CD4-positive, alpha-beta T cell (primary cell): ENCODE measurements at regions of chr19 and their contacts with region 1.

Region 1: DNA sequence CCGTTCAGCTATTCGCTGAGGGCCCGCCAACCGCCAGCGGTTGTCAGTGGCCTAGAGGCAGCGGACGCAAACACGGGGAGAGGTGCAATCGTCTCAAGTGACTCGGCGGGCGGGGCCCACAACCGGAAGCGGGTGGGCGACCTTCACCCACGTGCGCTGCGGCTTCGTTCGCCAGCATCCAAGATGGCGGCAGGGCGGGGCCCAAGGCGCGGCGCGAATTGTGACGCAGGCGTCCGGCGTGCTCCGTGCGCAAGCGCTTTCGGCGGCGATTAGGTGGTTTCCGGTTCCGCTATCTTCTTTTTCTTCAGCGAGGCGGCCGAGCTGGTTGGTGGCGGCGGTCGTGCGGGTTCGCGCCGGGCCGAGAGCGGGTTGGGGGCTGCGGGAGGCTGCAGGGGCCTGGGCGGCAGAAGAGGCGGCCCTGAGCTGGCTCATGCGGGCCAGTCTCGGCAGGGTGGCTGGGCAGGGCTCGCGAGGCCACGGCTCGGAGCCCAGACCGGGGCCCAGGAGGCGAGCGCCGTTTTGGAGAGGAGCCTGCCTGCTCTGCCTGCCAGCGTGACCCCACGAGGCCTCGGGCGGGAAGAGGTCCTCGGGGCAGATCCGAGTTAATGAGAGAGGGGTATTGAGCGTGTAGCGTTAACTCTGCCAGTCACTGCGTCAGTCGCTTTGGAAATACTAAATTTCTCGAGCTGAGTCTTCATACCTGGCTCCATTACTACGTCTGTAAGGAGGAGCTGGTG is at the start of gene UBA52:
- DNase-seq: peak; percentile 96 to 100 (median 98)
- ATAC-seq: peak; percentile 91
- H3K4me3 ChIP-seq: peak within 1 kb of the TSS; percentile 97
- H3K4me3 Mint-ChIP-seq: peak within 1 kb of the TSS; percentile 91
- H3K27ac ChIP-seq: peak within 1 kb of the TSS; percentile 89 to 94
- H3K27ac Mint-ChIP-seq: peak within 1 kb of the TSS; percentile 93
- H3K4me1 ChIP-seq: peaks cover 28% of the 10 kb centered on the region
- H3K4me1 Mint-ChIP-seq: peaks cover 20% of the 10 kb centered on the region
- H3K27me3 ChIP-seq: no peaks in the 10 kb centered on the region
- H3K27me3 Mint-ChIP-seq: no peaks in the 10 kb centered on the region
- CTCF ChIP-seq: no peak
- total RNA-seq, gene UBA52: 2,255 to 2,378 TPM

Region 2: GRCh38 chr19:18542936-18543815 is 28.6 kb before region 1 on chr19 and contains the start of gene FKBP8:
- CTCF ChIA-PET with region 1: interaction called, 6 read pairs
- POLR2A ChIA-PET with region 1: interaction called, 35 read pairs
- intact Hi-C with region 1: loop called (anchors 2 kb)
- DNase-seq: peak; percentile 89 to 97 (median 94)
- ATAC-seq: peak; percentile 93
- H3K4me3 ChIP-seq: peak within 1 kb of the TSS; percentile 63
- H3K4me3 Mint-ChIP-seq: peak within 1 kb of the TSS; percentile 98
- H3K27ac ChIP-seq: peak within 1 kb of the TSS; percentile 66 to 85
- H3K27ac Mint-ChIP-seq: peak within 1 kb of the TSS; percentile 96
- H3K4me1 ChIP-seq: peaks cover 28% of the 10 kb centered on the region
- H3K4me1 Mint-ChIP-seq: peaks cover 27% of the 10 kb centered on the region
- H3K27me3 ChIP-seq: no peaks in the 10 kb centered on the region
- H3K27me3 Mint-ChIP-seq: no peaks in the 10 kb centered on the region
- CTCF ChIP-seq: no peak
- total RNA-seq, gene FKBP8: 147 to 152 TPM

Region 3: GRCh38 chr19:18557474-18558201 is 14.1 kb before region 1 on chr19 and contains the start of gene KXD1:
- CTCF ChIA-PET with region 1: interaction called, 3 read pairs
- POLR2A ChIA-PET with region 1: interaction called, 87 read pairs
- intact Hi-C with region 1: loop called (anchors 1 kb)
- DNase-seq: peak; percentile 93 to 100 (median 97)
- ATAC-seq: peak; percentile 99
- H3K4me3 ChIP-seq: peak within 1 kb of the TSS; percentile 99
- H3K4me3 Mint-ChIP-seq: peak within 1 kb of the TSS; percentile 94
- H3K27ac ChIP-seq: peak within 1 kb of the TSS; percentile 94 to 97
- H3K27ac Mint-ChIP-seq: peak within 1 kb of the TSS; percentile 98
- H3K4me1 ChIP-seq: peaks cover 30% of the 10 kb centered on the region
- H3K4me1 Mint-ChIP-seq: peaks cover 26% of the 10 kb centered on the region
- H3K27me3 ChIP-seq: no peaks in the 10 kb centered on the region
- H3K27me3 Mint-ChIP-seq: no peaks in the 10 kb centered on the region
- CTCF ChIP-seq: no peak
- total RNA-seq, gene KXD1: 64.2 to 66.9 TPM

Region 4: DNA sequence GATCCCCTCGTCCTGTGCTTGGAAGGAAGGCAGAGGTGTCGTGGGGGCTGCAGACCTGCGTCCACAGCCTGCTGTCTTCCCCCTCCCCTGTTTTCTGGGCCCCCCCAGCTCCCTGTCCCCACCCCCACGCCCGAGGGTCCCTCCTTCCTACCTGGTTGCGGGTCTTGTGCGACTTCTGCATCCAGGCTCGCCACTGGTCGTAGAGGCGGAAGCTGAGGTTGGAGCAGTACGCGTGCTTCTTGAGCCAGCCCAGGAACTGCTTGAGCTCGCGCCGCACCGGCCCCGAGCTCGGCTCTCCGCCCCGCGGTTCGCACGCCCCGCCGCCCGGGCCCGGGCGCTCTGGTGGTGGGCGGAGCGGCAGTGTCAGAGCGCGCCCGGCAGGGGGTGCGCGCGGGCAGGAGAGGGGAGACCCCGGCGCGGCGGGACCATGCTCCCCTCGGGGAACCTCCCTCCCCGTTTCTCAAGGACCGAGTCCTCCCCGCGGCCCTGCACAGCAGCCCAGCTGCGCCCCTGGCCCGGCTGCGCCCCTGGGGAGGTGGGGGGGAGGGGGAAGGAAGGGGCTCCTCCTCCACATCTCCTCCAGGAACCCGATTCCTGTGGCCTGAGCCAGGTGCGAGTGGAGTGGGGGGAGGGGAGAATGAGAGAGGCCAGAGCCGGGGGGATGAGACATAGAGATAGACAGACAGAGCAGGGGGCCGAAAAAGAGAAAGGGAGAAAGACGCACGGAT is 22.5 kb after region 1 on chr19:
- CTCF ChIA-PET with region 1: interaction called, 26 read pairs
- POLR2A ChIA-PET with region 1: interaction called, 120 read pairs
- intact Hi-C with region 1: loop called in 1 of 2 experiments (anchors 2 kb)
- DNase-seq: peak; percentile 59 to 91 (median 70)
- ATAC-seq: peak; percentile 74
- H3K4me3 ChIP-seq: peak overlapping the region; percentile 52
- H3K4me3 Mint-ChIP-seq: peak overlapping the region; percentile 63
- H3K27ac ChIP-seq: no peak overlapping the region
- H3K27ac Mint-ChIP-seq: peak overlapping the region; percentile 42
- H3K4me1 ChIP-seq: peaks cover 40% of the 10 kb centered on the region
- H3K4me1 Mint-ChIP-seq: peaks cover 25% of the 10 kb centered on the region
- H3K27me3 ChIP-seq: peaks cover 3 to 8% of the 10 kb centered on the region in 2 experiments
- H3K27me3 Mint-ChIP-seq: peaks cover 4% of the 10 kb centered on the region
- CTCF ChIP-seq: peak; percentile 73

Region 5: DNA sequence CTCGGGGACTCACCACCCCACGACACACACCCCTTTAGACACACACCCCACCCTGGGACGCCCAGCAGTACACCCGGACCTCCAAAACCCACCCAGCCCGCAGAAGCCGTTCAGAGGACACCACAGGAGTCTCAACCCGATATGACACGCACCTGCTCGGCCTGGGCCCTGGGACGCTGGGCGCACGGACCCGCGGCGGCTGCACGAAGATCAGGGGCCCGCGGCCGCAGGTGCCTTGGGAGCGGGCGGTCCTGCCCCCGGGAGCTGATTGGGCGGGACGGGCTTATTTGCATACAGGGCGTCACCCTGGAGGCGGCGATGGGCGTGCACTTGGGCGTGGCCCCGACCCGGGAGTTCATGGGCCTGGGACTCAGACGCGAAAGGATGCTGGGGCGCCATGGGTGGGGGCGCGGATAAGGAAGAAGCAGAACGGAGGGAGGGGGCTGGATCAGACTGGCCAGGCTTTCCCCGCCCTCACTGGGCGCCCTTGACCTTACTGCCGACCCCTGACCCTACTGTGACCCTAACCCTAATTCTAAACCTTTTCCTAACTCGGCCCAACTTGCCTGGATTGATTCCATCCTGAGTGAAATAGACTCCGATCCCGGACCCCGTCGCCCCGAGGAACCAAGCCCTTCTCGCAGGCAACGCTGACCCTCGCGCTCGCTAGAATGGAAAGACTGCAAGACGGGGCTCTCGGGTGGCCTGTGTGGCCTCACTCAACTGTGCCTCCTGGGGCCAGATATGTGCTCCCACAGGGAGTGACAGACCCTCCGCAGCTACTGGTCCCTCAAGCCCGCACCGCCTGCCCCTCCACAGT is 598.5 kb after region 1 on chr19 and contains the start of gene MEF2B:
- CTCF ChIA-PET with region 1: no interaction called
- POLR2A ChIA-PET with region 1: no interaction called
- intact Hi-C with region 1: no loop called
- DNase-seq: peak; percentile 52 to 86 (median 74)
- ATAC-seq: peak; percentile 99
- H3K4me3 ChIP-seq: peak within 1 kb of the TSS; percentile 22
- H3K4me3 Mint-ChIP-seq: no peak within 1 kb of the TSS
- H3K27ac ChIP-seq: no peak within 1 kb of the TSS
- H3K27ac Mint-ChIP-seq: no peak within 1 kb of the TSS
- H3K4me1 ChIP-seq: peaks cover 14% of the 10 kb centered on the region
- H3K4me1 Mint-ChIP-seq: peaks cover 21% of the 10 kb centered on the region
- H3K27me3 ChIP-seq: no peaks in the 10 kb centered on the region
- H3K27me3 Mint-ChIP-seq: no peaks in the 10 kb centered on the region
- CTCF ChIP-seq: no peak
- total RNA-seq, gene MEF2B: 1.9 to 3.0 TPM